CD8-positive, alpha-beta T cell (primary cell): ENCODE measurements at regions of chrX and their contacts with region 1.

Region 1: GRCh38 chrX:78945186-78945912 is at the start of gene P2RY10:
- DNase-seq: peak in 8 of 9 experiments; percentile 1 to 86 (median 39)
- ATAC-seq: peak; percentile 90
- H3K4me3 ChIP-seq: peak within 1 kb of the TSS; percentile 71 to 83
- H3K4me3 Mint-ChIP-seq: peak within 1 kb of the TSS; percentile 96
- H3K27ac ChIP-seq: peak within 1 kb of the TSS; percentile 81 to 89
- H3K27ac Mint-ChIP-seq: peak within 1 kb of the TSS; percentile 99
- H3K4me1 ChIP-seq: peaks cover 34% of the 10 kb centered on the region
- H3K4me1 Mint-ChIP-seq: peaks cover 66% of the 10 kb centered on the region
- H3K27me3 ChIP-seq: no peaks in the 10 kb centered on the region
- H3K27me3 Mint-ChIP-seq: no peaks in the 10 kb centered on the region
- CTCF ChIP-seq: no peak
- total RNA-seq, gene P2RY10: 76.1 to 81.2 TPM

Region 2: GRCh38 chrX:78139160-78140123 is 805.9 kb before region 1 on chrX and contains the start of gene TAF9B:
- CTCF ChIA-PET with region 1: no interaction called
- POLR2A ChIA-PET with region 1: no interaction called
- intact Hi-C with region 1: loop called in 1 of 2 experiments (anchors 10 kb)
- DNase-seq: peak; percentile 68 to 89 (median 77)
- ATAC-seq: peak; percentile 97
- H3K4me3 ChIP-seq: peak within 1 kb of the TSS; percentile 73 to 93
- H3K4me3 Mint-ChIP-seq: peak within 1 kb of the TSS; percentile 93
- H3K27ac ChIP-seq: peak within 1 kb of the TSS; percentile 77 to 83
- H3K27ac Mint-ChIP-seq: peak within 1 kb of the TSS; percentile 92
- H3K4me1 ChIP-seq: no peaks in the 10 kb centered on the region
- H3K4me1 Mint-ChIP-seq: peaks cover 9% of the 10 kb centered on the region
- H3K27me3 ChIP-seq: no peaks in the 10 kb centered on the region
- H3K27me3 Mint-ChIP-seq: no peaks in the 10 kb centered on the region
- CTCF ChIP-seq: no peak
- total RNA-seq, gene TAF9B: 5.7 to 7.1 TPM

Region 3: DNA sequence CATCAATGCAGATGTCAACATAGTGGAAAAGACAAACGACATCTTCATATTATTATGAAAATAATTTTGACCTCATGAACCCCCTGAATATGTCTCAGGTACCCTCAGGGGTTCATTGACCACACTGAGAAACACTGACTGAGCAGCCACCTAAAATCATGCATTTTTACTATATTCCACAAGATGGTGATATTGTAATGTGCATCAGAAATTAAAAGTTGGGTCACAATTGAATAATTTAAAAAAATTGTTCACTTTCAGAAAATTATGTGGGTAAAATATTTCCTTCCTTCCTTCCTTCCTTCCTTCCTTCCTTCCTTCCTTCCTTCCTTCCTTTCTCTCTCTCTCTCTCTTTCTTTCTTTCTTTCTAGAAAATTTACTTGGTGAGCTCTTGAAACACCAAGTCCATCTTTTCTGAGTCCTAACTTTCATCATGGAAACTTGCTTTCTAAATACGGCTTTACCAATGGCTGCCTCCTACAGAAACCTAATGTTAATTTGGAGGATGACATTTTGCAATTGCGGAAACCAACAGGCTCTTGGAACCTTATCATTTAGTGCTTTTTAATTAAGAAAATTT is 389.9 kb before region 1 on chrX:
- CTCF ChIA-PET with region 1: no interaction called
- POLR2A ChIA-PET with region 1: no interaction called
- intact Hi-C with region 1: loop called in 1 of 2 experiments (anchors 5 kb)
- DNase-seq: peak in 2 of 9 experiments; percentile 34 to 52
- ATAC-seq: no peak
- H3K4me3 ChIP-seq: no peak overlapping the region
- H3K4me3 Mint-ChIP-seq: no peak overlapping the region
- H3K27ac ChIP-seq: no peak overlapping the region
- H3K27ac Mint-ChIP-seq: peak overlapping the region; percentile 85
- H3K4me1 ChIP-seq: no peaks in the 10 kb centered on the region
- H3K4me1 Mint-ChIP-seq: no peaks in the 10 kb centered on the region
- H3K27me3 ChIP-seq: no peaks in the 10 kb centered on the region
- H3K27me3 Mint-ChIP-seq: no peaks in the 10 kb centered on the region
- CTCF ChIP-seq: peak; percentile 68

Region 4: GRCh38 chrX:79081895-79082512 is 136.7 kb after region 1 on chrX:
- CTCF ChIA-PET with region 1: interaction called, 3 read pairs
- POLR2A ChIA-PET with region 1: no interaction called
- intact Hi-C with region 1: loop called (anchors 5 to 10 kb)
- DNase-seq: peak in 6 of 9 experiments; percentile 6 to 79 (median 30)
- ATAC-seq: peak; percentile 89
- H3K4me3 ChIP-seq: no peak overlapping the region
- H3K4me3 Mint-ChIP-seq: peak overlapping the region; percentile 74
- H3K27ac ChIP-seq: peak overlapping the region in 1 of 2 experiments; percentile 9
- H3K27ac Mint-ChIP-seq: peak overlapping the region; percentile 94
- H3K4me1 ChIP-seq: peaks cover 27% of the 10 kb centered on the region
- H3K4me1 Mint-ChIP-seq: peaks cover 30% of the 10 kb centered on the region
- H3K27me3 ChIP-seq: no peaks in the 10 kb centered on the region
- H3K27me3 Mint-ChIP-seq: no peaks in the 10 kb centered on the region
- CTCF ChIP-seq: peak; percentile 54

Region 5: DNA sequence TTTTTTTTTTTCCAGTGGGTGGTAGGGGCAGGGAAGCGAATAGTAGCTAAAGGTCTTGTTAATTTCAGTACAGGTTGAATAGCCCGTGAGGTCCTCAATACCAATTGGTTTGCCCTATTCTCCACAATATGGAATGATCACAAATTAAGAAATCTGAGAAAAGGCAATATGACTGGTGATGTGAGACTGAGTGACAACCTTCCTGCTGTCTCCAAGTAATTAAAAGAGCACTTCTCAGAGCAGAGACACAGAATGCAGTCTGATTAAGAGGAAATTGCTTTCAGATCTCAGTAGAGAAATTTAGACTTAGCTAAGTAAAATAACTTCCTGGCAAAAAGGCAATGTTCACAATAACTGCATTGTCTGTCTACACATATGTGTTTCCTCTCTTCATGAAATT is 222.1 kb after region 1 on chrX:
- CTCF ChIA-PET with region 1: no interaction called
- POLR2A ChIA-PET with region 1: no interaction called
- intact Hi-C with region 1: loop called (anchors 5 to 10 kb)
- DNase-seq: no peak
- ATAC-seq: peak; percentile 26
- H3K4me3 ChIP-seq: peak overlapping the region in 1 of 2 experiments; percentile 20
- H3K4me3 Mint-ChIP-seq: peak overlapping the region; percentile 74
- H3K27ac ChIP-seq: peak overlapping the region; percentile 47 to 80
- H3K27ac Mint-ChIP-seq: peak overlapping the region; percentile 95
- H3K4me1 ChIP-seq: peaks cover 86% of the 10 kb centered on the region
- H3K4me1 Mint-ChIP-seq: peaks cover 89% of the 10 kb centered on the region
- H3K27me3 ChIP-seq: no peaks in the 10 kb centered on the region
- H3K27me3 Mint-ChIP-seq: no peaks in the 10 kb centered on the region
- CTCF ChIP-seq: no peak